HCT116 (cell line): ENCODE measurements at regions of chr4 and their contacts with region 1.

Region 1: GRCh38 chr4:80221161-80221560 is 23.9 kb downstream of the PRDM8 start:
- DNase-seq: no peak
- ATAC-seq: no peak
- H3K4me3 ChIP-seq: no peak overlapping the region
- H3K27ac ChIP-seq: no peak overlapping the region
- H3K4me1 ChIP-seq: no peaks in the 10 kb centered on the region
- H3K27me3 ChIP-seq: peaks cover 53% of the 10 kb centered on the region
- CTCF ChIP-seq: peak in 2 of 3 experiments; percentile 19 to 20; a peak in 2 of 6 replicates
- POLR2A ChIP-seq: no peak
- RAD21 ChIP-seq: 0 out of 2 replicates have a peak, but pooled peaks have one; percentile 26

Region 2: GRCh38 chr4:79759793-79760192 is 461.4 kb before region 1 on chr4:
- CTCF ChIA-PET with region 1: no interaction called
- POLR2A ChIA-PET with region 1: no interaction called
- RAD21 ChIA-PET with region 1: no interaction called
- intact Hi-C with region 1: no loop called
- DNase-seq: no peak
- ATAC-seq: no peak
- H3K4me3 ChIP-seq: no peak overlapping the region
- H3K27ac ChIP-seq: no peak overlapping the region
- H3K4me1 ChIP-seq: no peaks in the 10 kb centered on the region
- H3K27me3 ChIP-seq: no peaks in the 10 kb centered on the region
- CTCF ChIP-seq: no peak
- POLR2A ChIP-seq: no peak
- RAD21 ChIP-seq: no peak

Region 3: GRCh38 chr4:80322716-80323115 is 101.6 kb after region 1 on chr4:
- CTCF ChIA-PET with region 1: interaction called, 12 read pairs
- POLR2A ChIA-PET with region 1: no interaction called
- RAD21 ChIA-PET with region 1: no interaction called
- intact Hi-C with region 1: no loop called
- DNase-seq: no peak
- ATAC-seq: peak; percentile 61
- H3K4me3 ChIP-seq: no peak overlapping the region
- H3K27ac ChIP-seq: no peak overlapping the region
- H3K4me1 ChIP-seq: no peaks in the 10 kb centered on the region
- H3K27me3 ChIP-seq: peaks cover 56% of the 10 kb centered on the region
- CTCF ChIP-seq: no peak
- POLR2A ChIP-seq: no peak
- RAD21 ChIP-seq: peak; percentile 16; the same call in 1 of the 2 replicates

Region 4: GRCh38 chr4:81052119-81053068 is 831.2 kb after region 1 on chr4:
- CTCF ChIA-PET with region 1: no interaction called
- POLR2A ChIA-PET with region 1: no interaction called
- RAD21 ChIA-PET with region 1: no interaction called
- intact Hi-C with region 1: loop called (anchors 10 kb)
- DNase-seq: peak; percentile 59
- ATAC-seq: peak; percentile 99
- H3K4me3 ChIP-seq: no peak overlapping the region
- H3K27ac ChIP-seq: no peak overlapping the region
- H3K4me1 ChIP-seq: no peaks in the 10 kb centered on the region
- H3K27me3 ChIP-seq: peaks cover 48% of the 10 kb centered on the region
- CTCF ChIP-seq: peak; percentile 48 to 79 (median 75); a peak in 5 of 6 replicates
- POLR2A ChIP-seq: no peak
- RAD21 ChIP-seq: peak; percentile 70